ENCODE measurements at regions of chr5 and their contacts with region 1.

Region 1: GRCh38 chr5:146731909-146732659 is 146.5 kb downstream of the PPP2R2B start:
- DNase-seq: no peak
- H3K4me3 ChIP-seq: no peak overlapping the region
- H3K4me3 Mint-ChIP-seq: peak overlapping the region; percentile 24
- H3K27ac Mint-ChIP-seq: peak overlapping the region; percentile 51
- H3K4me1 ChIP-seq: peaks cover 24% of the 10 kb centered on the region
- H3K4me1 Mint-ChIP-seq: peaks cover 14% of the 10 kb centered on the region
- H3K27me3 ChIP-seq: no peaks in the 10 kb centered on the region
- H3K27me3 Mint-ChIP-seq: no peaks in the 10 kb centered on the region
- CTCF ChIP-seq: no peak

Region 2: DNA sequence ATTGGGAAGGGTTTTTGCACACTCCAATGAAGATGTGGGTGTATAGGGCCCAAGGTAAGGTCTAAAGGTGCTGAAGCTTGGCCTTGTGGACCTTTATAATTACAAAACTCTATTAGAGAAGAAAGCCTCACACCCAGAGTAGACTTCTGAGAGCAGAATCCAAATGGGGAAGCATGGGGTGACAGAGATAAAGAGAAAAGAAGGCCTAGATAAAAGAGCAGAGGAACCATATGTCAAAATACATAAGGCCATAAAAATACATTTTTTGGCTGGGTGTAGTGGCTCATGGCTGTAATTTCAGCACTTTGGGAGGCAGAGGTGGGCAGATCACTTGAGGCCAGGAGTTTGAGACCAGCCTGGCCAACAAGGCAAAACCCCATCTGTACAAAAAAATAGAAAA is 312.4 kb before region 1 on chr5:
- CTCF ChIA-PET with region 1: no interaction called
- POLR2A ChIA-PET with region 1: no interaction called
- intact Hi-C with region 1: no loop called
- DNase-seq: no peak
- H3K4me3 ChIP-seq: no peak overlapping the region
- H3K4me3 Mint-ChIP-seq: no peak overlapping the region
- H3K27ac Mint-ChIP-seq: no peak overlapping the region
- H3K4me1 ChIP-seq: no peaks in the 10 kb centered on the region
- H3K4me1 Mint-ChIP-seq: no peaks in the 10 kb centered on the region
- H3K27me3 ChIP-seq: no peaks in the 10 kb centered on the region
- H3K27me3 Mint-ChIP-seq: peaks cover 23% of the 10 kb centered on the region
- CTCF ChIP-seq: no peak

Region 3: GRCh38 chr5:146765089-146765832 is 33.2 kb after region 1 on chr5:
- CTCF ChIA-PET with region 1: no interaction called
- POLR2A ChIA-PET with region 1: no interaction called
- intact Hi-C with region 1: no loop called
- DNase-seq: no peak
- H3K4me3 ChIP-seq: no peak overlapping the region
- H3K4me3 Mint-ChIP-seq: no peak overlapping the region
- H3K27ac Mint-ChIP-seq: no peak overlapping the region
- H3K4me1 ChIP-seq: no peaks in the 10 kb centered on the region
- H3K4me1 Mint-ChIP-seq: peaks cover 7% of the 10 kb centered on the region
- H3K27me3 ChIP-seq: no peaks in the 10 kb centered on the region
- H3K27me3 Mint-ChIP-seq: no peaks in the 10 kb centered on the region
- CTCF ChIP-seq: no peak

Region 4: GRCh38 chr5:147208134-147208533 is 476.1 kb after region 1 on chr5:
- CTCF ChIA-PET with region 1: interaction called, 11 read pairs
- POLR2A ChIA-PET with region 1: no interaction called
- intact Hi-C with region 1: no loop called
- DNase-seq: no peak
- H3K4me3 ChIP-seq: no peak overlapping the region
- H3K4me3 Mint-ChIP-seq: no peak overlapping the region
- H3K27ac Mint-ChIP-seq: no peak overlapping the region
- H3K4me1 ChIP-seq: no peaks in the 10 kb centered on the region
- H3K4me1 Mint-ChIP-seq: no peaks in the 10 kb centered on the region
- H3K27me3 ChIP-seq: no peaks in the 10 kb centered on the region
- H3K27me3 Mint-ChIP-seq: no peaks in the 10 kb centered on the region
- CTCF ChIP-seq: no peak

Measured in Caco-2 (cell line).